PC-9 (cell line): ENCODE measurements at regions of chr14 and their contacts with region 1.

Region 1: GRCh38 chr14:77457522-77458290 is at the starts of genes AHSA1 and VIPAS39:
- DNase-seq: peak; percentile 99 to 100
- H3K4me3 ChIP-seq: peak within 1 kb of the TSS; percentile 73
- H3K27ac ChIP-seq: peak within 1 kb of the TSS; percentile 80
- H3K4me1 ChIP-seq: peaks cover 20% of the 10 kb centered on the region
- H3K27me3 ChIP-seq: no peaks in the 10 kb centered on the region
- CTCF ChIP-seq: no peak
- total RNA-seq, gene AHSA1: 448 and 674 TPM in 2 replicates
- total RNA-seq, gene VIPAS39: 46.1 and 54.5 TPM in 2 replicates

Region 2: GRCh38 chr14:77151918-77152588 is 305.7 kb before region 1 on chr14:
- CTCF ChIA-PET with region 1: no interaction called
- POLR2A ChIA-PET with region 1: no interaction called
- intact Hi-C with region 1: loop called (anchors 5 kb)
- DNase-seq: peak; percentile 31 to 66
- H3K4me3 ChIP-seq: no peak overlapping the region
- H3K27ac ChIP-seq: no peak overlapping the region
- H3K4me1 ChIP-seq: no peaks in the 10 kb centered on the region
- H3K27me3 ChIP-seq: peaks cover 52% of the 10 kb centered on the region
- CTCF ChIP-seq: peak; percentile 70

Region 3: DNA sequence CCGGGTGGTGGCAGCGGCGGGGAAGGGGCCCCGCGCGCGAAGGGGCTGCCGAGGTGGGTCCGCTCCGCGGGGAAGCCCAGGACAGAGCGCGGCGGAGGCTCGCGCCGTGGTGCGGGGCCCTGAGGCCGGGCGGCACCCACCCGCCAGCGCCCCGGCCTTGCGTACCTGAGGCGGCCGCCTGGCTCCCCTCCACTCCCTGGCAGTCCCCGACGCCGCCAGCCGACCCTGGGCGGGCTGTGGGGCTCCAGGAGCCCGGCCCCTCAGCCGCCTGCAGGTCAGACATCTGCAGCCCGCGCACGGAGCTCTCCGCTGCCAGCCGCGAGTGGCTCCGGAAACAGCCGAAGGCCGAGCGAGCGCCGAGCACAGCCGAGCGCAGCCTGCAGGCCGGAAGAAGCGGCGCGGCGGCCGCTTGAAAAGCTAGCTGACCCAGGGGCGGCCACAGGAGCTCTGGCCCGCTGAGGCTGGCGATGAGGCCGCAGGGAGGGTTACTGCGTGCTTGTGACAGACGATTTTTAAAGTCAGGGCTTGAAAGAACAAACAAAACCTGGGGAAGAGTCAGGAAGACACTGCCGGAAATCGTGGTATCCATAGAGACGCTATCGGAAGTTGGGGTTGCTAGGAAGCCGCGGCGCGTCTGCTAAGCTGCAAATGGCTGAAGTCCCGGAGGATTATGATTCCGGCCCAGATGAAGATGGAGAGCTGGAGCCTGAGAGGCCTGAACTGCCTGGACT is 80.8 kb before region 1 on chr14 and contains the starts of genes SAMD15 and TMED8:
- CTCF ChIA-PET with region 1: no interaction called
- POLR2A ChIA-PET with region 1: no interaction called
- intact Hi-C with region 1: loop called (anchors 1 kb)
- DNase-seq: peak; percentile 83 to 97
- H3K4me3 ChIP-seq: peak within 1 kb of the TSS; percentile 82
- H3K27ac ChIP-seq: peak within 1 kb of the TSS; percentile 40
- H3K4me1 ChIP-seq: peaks cover 19% of the 10 kb centered on the region
- H3K27me3 ChIP-seq: no peaks in the 10 kb centered on the region
- CTCF ChIP-seq: peak; percentile 46; the same call in 1 of the 2 replicates
- total RNA-seq, gene SAMD15: 4.8 and 7.8 TPM in 2 replicates
- total RNA-seq, gene TMED8: 32.1 and 42.6 TPM in 2 replicates

Region 4: GRCh38 chr14:77554207-77554606 is 96.5 kb after region 1 on chr14:
- CTCF ChIA-PET with region 1: interaction called, 8 read pairs
- POLR2A ChIA-PET with region 1: no interaction called
- intact Hi-C with region 1: loop called (anchors 5 kb)
- DNase-seq: no peak
- H3K4me3 ChIP-seq: no peak overlapping the region
- H3K27ac ChIP-seq: no peak overlapping the region
- H3K4me1 ChIP-seq: no peaks in the 10 kb centered on the region
- H3K27me3 ChIP-seq: no peaks in the 10 kb centered on the region
- CTCF ChIP-seq: no peak

Region 5: GRCh38 chr14:77707724-77708408 is 250.2 kb after region 1 on chr14 and contains the starts of genes ALKBH1 and SLIRP:
- CTCF ChIA-PET with region 1: interaction called, 4 read pairs
- POLR2A ChIA-PET with region 1: no interaction called
- intact Hi-C with region 1: loop called (anchors 1 kb)
- DNase-seq: peak; percentile 88 to 92
- H3K4me3 ChIP-seq: peak within 1 kb of the TSS; percentile 74
- H3K27ac ChIP-seq: peak within 1 kb of the TSS; percentile 27
- H3K4me1 ChIP-seq: peaks cover 25% of the 10 kb centered on the region
- H3K27me3 ChIP-seq: no peaks in the 10 kb centered on the region
- CTCF ChIP-seq: no peak; the same call in 1 of the 2 replicates
- total RNA-seq, gene ALKBH1: 22.7 and 25.0 TPM in 2 replicates
- total RNA-seq, gene SLIRP: 298 and 375 TPM in 2 replicates

Region 6: DNA sequence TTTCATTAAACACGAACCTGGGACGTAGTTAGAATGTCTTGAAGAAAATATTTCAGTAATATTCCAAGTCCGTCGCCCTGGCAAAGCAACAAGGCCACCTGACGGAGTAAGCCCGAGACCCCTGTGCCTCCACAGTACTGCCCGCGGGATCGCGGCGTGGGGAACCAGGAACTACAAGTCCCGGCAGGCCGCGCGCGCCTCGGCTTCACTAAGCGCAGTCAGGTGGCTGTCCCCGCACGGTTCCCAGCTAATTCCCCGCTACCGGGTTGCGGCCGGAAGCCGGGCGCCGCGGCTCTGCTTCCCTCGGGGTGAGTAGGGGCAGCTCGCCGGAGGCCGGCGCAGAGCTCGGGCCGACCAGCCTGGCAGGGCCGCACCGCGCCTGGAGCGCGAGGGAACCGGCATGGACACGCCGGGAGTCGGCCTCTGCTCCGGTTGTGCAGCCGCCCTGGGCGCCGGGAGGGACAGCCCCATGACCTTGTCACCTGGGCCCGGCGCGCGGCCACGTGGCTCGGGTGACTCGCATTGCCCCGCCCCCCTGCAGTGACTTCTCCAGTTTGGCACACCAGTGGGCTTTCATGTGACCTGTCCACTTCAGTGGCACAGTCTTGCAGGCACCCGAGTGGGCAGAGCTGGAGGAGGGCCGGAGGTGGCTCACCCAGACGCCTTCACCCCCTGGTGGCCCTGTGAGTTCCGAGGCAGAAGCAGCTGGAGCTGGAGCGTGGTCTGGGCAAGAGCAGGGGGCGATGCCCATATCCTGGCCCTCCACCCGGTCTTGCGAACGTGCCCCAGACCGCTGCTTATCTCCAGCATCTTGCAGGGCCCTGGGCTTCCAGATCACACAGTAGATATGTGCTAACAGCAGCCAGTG is 342.4 kb after region 1 on chr14 and contains the start of gene ADCK1:
- CTCF ChIA-PET with region 1: no interaction called
- POLR2A ChIA-PET with region 1: no interaction called
- intact Hi-C with region 1: loop called (anchors 1 kb)
- DNase-seq: peak; percentile 75 to 95
- H3K4me3 ChIP-seq: peak within 1 kb of the TSS; percentile 88
- H3K27ac ChIP-seq: peak within 1 kb of the TSS; percentile 58
- H3K4me1 ChIP-seq: peaks cover 21% of the 10 kb centered on the region
- H3K27me3 ChIP-seq: no peaks in the 10 kb centered on the region
- CTCF ChIP-seq: peak; percentile 55; the same call in 1 of the 2 replicates
- total RNA-seq, gene ADCK1: 19.0 and 26.3 TPM in 2 replicates